ENCODE measurements at regions of chr3 and their contacts with region 1.

Region 1: DNA sequence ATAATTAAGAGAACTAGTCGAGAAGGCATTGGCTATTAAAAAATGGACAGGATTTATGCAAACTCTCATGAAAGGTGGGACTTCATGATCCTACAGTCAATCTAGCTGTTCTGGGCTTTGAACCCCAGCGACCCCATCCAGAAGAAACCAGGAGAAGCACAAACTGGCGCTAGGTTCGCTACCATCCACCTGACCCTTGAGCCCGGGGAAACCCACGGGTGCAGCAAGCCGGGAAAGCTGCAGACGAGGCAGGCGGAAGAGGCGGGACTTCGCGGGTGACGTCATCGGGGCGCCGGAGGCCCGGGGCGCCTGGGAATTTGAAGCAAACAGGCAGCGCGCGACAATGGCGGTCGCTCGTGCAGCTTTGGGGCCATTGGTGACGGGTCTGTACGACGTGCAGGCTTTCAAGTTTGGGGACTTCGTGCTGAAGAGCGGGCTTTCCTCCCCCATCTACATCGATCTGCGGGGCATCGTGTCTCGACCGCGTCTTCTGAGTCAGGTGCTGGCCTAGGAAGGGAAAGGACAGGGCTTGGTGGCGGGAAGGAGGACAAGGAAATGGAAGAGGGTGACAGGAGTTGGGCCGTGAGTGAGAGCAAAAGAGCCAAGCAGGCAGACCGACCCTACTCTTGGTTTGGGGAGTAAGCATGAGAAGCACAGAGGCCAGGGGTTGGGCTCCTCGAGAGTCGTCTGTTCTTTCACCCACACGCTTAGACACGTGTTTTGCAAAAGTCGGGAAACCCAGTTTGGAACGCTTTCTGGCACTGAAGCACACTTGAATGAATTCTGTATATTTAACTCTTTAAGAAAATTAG is at the start of gene UMPS:
- DNase-seq: peak; percentile 89 to 93 (median 90)
- H3K4me3 ChIP-seq: peak within 1 kb of the TSS; percentile 77 to 85
- H3K4me3 Mint-ChIP-seq: peak within 1 kb of the TSS; percentile 97 to 100 (median 99)
- H3K27ac ChIP-seq: peak within 1 kb of the TSS; percentile 63
- H3K27ac Mint-ChIP-seq: peak within 1 kb of the TSS; percentile 95 to 100 (median 99)
- H3K4me1 ChIP-seq: peaks cover 36% of the 10 kb centered on the region
- H3K4me1 Mint-ChIP-seq: peaks cover 25 to 41% (median 32%) of the 10 kb centered on the region in 4 donors
- H3K27me3 ChIP-seq: peaks cover 6% of the 10 kb centered on the region
- H3K27me3 Mint-ChIP-seq: peaks cover 4 to 9% of the 10 kb centered on the region in 2 donors
- total RNA-seq, gene UMPS: 25.5 to 31.5 TPM

Region 2: GRCh38 chr3:124584552-124585391 is 145.6 kb before region 1 on chr3:
- CTCF ChIA-PET with region 1: no interaction called
- POLR2A ChIA-PET with region 1: interaction called, 3 read pairs
- intact Hi-C with region 1: loop called (anchors 1 kb)
- DNase-seq: peak in 4 of 5 donors; percentile 36 to 49 (median 43)
- H3K4me3 ChIP-seq: peak overlapping the region; percentile 52 to 58
- H3K4me3 Mint-ChIP-seq: peak overlapping the region; percentile 87 to 92 (median 90)
- H3K27ac ChIP-seq: no peak overlapping the region
- H3K27ac Mint-ChIP-seq: peak overlapping the region; percentile 74 to 91 (median 82)
- H3K4me1 ChIP-seq: peaks cover 36% of the 10 kb centered on the region
- H3K4me1 Mint-ChIP-seq: peaks cover 17 to 41% (median 29%) of the 10 kb centered on the region in 4 donors
- H3K27me3 ChIP-seq: no peaks in the 10 kb centered on the region
- H3K27me3 Mint-ChIP-seq: peaks cover 5 to 16% of the 10 kb centered on the region in 2 donors

Region 3: GRCh38 chr3:125594581-125595011 is 864.3 kb after region 1 on chr3:
- CTCF ChIA-PET with region 1: no interaction called
- POLR2A ChIA-PET with region 1: no interaction called
- intact Hi-C with region 1: loop called (anchors 1 kb)
- DNase-seq: peak in 1 of 5 donors; percentile 2
- H3K4me3 ChIP-seq: peak overlapping the region; percentile 43 to 80
- H3K4me3 Mint-ChIP-seq: peak overlapping the region; percentile 88 to 100 (median 98)
- H3K27ac ChIP-seq: peak overlapping the region; percentile 75
- H3K27ac Mint-ChIP-seq: peak overlapping the region; percentile 88 to 99 (median 93)
- H3K4me1 ChIP-seq: peaks cover 52% of the 10 kb centered on the region
- H3K4me1 Mint-ChIP-seq: peaks cover 25 to 55% (median 40%) of the 10 kb centered on the region in 4 donors
- H3K27me3 ChIP-seq: no peaks in the 10 kb centered on the region
- H3K27me3 Mint-ChIP-seq: no peaks in the 10 kb centered on the region

Measured in CD4-positive, alpha-beta memory T cell (primary cell).